ENCODE measurements at regions of chr9 and their contacts with region 1.

Region 1: DNA sequence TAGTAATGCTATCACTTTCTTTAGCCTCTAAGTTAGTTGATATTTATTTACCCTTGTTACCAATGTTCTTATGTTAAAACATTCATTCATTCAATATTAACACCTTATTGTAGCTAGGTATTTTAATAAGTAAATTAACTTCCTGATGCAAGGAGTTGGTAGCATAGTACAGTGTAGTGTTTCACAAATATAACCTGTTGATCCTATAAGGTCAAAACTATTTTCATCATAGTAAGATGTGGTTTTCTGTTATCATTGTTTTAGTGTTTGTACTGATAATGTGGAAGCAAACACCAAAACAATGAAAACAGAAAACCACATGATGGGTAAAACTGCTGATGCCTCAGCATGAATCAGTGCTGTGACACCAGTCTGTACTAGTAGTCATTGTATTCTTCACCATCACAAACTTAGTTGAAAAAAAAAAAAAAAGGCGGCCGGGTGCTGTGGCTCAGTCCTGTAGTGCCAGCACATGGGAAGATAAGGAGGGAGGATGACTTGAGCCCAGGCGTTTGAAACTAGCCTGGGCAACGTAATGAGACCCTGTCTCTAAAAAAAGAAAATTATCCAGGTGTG is 36.5 kb downstream of the ZCCHC7 start:
- DNase-seq: no peak
- ATAC-seq: peak; percentile 77
- H3K4me3 ChIP-seq: no peak overlapping the region
- H3K27ac ChIP-seq: no peak overlapping the region
- H3K4me1 ChIP-seq: peaks cover 8% of the 10 kb centered on the region; the same call in 1 of the 2 replicates
- H3K27me3 ChIP-seq: no peaks in the 10 kb centered on the region
- CTCF ChIP-seq: no peak
- EP300 ChIP-seq: 0 out of 4 replicates have a peak, but pooled peaks of 1 of the 2 experiments have one; percentile 13
- POLR2A ChIP-seq: no peak
- RAD21 ChIP-seq: no peak

Region 2: GRCh38 chr9:37174247-37174646 is 17.4 kb after region 1 on chr9:
- CTCF ChIA-PET with region 1: interaction called, 8 read pairs
- POLR2A ChIA-PET with region 1: interaction called, 6 read pairs
- RAD21 ChIA-PET with region 1: interaction called, 3 read pairs
- SMC1A ChIA-PET with region 1: interaction called, 25 read pairs
- in situ Hi-C with region 1: no loop called
- intact Hi-C with region 1: no loop called
- DNase-seq: no peak
- ATAC-seq: no peak
- H3K4me3 ChIP-seq: no peak overlapping the region
- H3K27ac ChIP-seq: no peak overlapping the region
- H3K4me1 ChIP-seq: no peaks in the 10 kb centered on the region; the same call in 1 of the 2 replicates
- H3K27me3 ChIP-seq: no peaks in the 10 kb centered on the region
- CTCF ChIP-seq: no peak
- EP300 ChIP-seq: no peak
- POLR2A ChIP-seq: no peak
- RAD21 ChIP-seq: no peak

Measured in GM12878 (cell line).